ENCODE measurements at regions of chr12 and their contacts with region 1.

Region 1: DNA sequence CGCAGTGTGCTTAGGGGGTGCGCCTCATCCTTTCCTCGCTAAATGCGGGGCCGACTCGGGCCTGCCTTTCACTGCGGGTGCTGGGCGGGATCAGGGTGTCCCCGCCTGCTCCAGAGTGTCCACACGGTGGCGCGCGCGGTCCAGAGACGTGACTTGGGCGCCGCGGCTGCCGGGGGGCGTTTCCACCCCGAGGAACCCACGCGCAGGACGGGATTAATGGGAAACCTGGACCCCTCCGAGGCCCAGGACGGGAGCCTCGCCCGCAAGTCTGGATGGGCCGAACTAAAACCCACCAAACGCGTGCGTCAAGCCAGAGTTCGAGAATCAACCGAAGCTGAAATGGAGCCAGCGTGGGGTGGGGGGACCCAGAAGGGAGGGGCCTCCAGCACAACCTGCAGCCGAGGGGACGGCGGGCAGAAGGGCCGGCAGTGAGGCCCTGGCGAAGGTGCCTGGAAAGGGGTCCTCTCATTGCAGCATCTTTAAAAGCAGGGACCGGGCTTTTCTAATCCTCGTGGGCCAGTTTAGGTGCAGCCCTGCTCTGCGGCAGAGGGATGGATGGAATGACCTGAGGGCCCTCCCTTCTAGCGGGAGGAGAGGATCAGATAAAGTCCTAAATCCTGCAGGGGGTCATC is 93.3 kb downstream of the NINJ2 start:
- DNase-seq: peak; percentile 90 to 91
- ATAC-seq: peak; percentile 69 to 88 (median 80)
- H3K4me3 ChIP-seq: peak overlapping the region; percentile 34 to 78 (median 64)
- H3K27ac ChIP-seq: peak overlapping the region; percentile 86 to 99 (median 93)
- H3K4me1 ChIP-seq: peaks cover 16 to 49% (median 37%) of the 10 kb centered on the region in 9 donors
- H3K27me3 ChIP-seq: no peaks in the 10 kb centered on the region
- CTCF ChIP-seq: peak; percentile 91 to 99 (median 95)

Region 2: DNA sequence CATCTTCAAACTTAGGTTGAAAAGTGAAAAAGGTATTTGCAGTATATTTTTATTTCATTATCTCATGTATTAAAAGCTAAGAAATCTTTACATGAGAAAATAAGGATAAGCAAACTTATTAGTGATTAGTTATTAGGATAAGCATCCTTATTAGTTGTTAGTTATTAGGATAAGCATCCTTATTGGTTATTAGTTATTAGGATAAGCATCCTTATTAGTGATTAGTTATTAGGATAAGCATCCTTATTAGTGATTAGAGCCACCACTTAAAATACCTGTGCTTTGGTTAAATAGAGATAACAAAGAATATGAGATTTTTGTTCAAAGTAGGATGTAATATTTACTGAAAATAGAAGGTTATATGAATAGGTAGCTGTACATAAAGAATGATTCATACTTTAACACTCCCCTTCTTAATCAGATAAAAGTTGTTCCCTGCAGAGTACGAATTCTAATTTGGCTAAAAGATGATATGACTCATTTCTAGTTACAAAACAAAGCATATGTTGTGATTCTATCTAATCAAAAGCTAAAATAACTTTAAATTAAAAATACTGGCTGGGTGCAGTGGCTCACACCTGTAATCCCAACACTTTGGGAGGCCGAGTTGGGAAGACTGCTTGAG is 237.2 kb before region 1 on chr12:
- intact Hi-C with region 1: no loop called
- DNase-seq: no peak
- ATAC-seq: no peak
- H3K4me3 ChIP-seq: no peak overlapping the region
- H3K27ac ChIP-seq: no peak overlapping the region
- H3K4me1 ChIP-seq: no peaks in the 10 kb centered on the region
- H3K27me3 ChIP-seq: no peaks in the 10 kb centered on the region
- CTCF ChIP-seq: no peak

Region 3: DNA sequence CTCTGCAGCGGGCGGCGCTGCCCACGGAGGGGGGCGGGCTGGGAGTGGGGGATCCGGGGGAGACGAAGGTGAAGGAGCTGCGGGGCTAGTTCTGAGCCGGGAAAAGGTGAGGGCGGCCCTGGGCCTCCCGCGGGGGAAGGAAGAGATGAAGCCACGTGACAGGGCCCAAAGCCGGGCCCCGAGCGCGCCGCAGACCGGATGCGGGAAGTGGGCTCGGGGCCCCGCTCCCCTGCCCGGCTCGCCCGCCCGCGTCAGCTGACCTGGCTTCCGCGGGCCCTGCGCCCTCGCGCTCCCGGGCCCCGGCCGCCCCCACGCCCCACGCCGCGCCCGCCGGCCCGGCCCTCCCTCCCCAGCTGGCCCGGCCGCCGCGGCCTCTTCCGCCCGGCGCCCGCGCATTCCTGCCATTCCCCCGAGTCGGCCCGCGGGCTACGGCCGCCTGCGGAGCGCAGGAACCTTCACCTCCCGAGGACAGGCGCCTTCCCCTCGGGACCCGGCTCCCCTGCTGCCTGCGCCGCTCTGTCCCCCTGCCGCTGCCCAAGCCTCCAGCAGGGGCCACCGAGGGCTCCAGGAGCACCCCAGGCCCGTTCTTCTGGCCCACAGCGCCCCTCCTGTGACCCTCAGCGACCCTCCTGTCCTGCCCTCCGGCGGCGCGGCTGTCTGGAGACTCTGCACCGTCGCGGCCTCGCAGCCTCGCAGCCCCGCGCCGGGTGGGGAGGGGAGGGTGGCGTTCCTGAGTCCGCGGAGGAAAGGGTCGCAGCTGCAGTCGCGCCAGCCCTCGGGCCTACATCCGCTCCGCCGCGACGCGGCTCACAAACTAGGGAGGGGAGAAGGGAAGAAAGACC is 72.9 kb after region 1 on chr12:
- intact Hi-C with region 1: loop called in 9 of 10 experiments (anchors 5 to 10 kb)
- DNase-seq: peak; percentile 77 to 82
- ATAC-seq: peak; percentile 60 to 82 (median 68)
- H3K4me3 ChIP-seq: peak overlapping the region; percentile 45 to 76 (median 68)
- H3K27ac ChIP-seq: peak overlapping the region; percentile 98 to 100 (median 99)
- H3K4me1 ChIP-seq: peaks cover 23 to 88% (median 60%) of the 10 kb centered on the region in 9 donors
- H3K27me3 ChIP-seq: no peaks in the 10 kb centered on the region
- CTCF ChIP-seq: peak in 8 of 9 donors; percentile 5 to 49 (median 36)

Region 4: DNA sequence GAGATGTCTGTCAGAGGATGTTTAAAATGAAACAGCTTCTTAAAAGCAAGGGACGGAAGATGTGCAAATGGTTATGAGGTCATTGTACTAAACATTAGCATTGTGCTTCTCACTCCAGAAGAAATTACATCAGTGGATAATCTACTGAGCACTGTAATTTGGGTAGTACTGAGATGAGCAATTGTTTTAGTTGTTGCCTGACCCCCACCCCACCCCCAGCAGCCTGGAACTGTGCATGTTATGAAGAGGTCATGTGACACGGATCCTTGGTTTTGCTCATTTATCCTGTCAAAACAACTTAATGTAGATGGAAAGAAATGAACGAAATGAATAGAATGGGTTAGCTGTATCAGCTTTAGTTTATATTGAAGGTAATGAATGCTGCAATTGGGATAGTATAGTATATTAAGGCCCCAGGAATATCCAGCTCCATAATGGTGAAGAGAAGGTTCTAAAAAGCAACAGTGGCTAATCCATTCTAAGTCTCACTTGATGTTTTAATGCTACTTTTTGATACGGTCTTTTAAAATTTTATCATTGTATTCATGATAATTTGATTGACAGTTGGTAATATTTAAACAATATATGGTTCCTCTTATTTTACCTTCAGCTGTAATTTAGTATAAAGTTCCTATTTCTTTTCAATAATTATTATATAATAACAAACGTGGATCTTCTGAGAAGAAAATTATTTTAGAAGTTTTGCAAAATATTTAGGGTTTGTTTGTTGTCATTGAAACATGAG is 240.9 kb after region 1 on chr12:
- intact Hi-C with region 1: loop called (anchors 2 to 10 kb)
- DNase-seq: no peak
- ATAC-seq: peak in 1 of 8 donors; percentile 34
- H3K4me3 ChIP-seq: no peak overlapping the region
- H3K27ac ChIP-seq: no peak overlapping the region
- H3K4me1 ChIP-seq: peaks cover 0 to 77% (median 54%) of the 10 kb centered on the region in 9 donors
- H3K27me3 ChIP-seq: no peaks in the 10 kb centered on the region
- CTCF ChIP-seq: no peak

Region 5: DNA sequence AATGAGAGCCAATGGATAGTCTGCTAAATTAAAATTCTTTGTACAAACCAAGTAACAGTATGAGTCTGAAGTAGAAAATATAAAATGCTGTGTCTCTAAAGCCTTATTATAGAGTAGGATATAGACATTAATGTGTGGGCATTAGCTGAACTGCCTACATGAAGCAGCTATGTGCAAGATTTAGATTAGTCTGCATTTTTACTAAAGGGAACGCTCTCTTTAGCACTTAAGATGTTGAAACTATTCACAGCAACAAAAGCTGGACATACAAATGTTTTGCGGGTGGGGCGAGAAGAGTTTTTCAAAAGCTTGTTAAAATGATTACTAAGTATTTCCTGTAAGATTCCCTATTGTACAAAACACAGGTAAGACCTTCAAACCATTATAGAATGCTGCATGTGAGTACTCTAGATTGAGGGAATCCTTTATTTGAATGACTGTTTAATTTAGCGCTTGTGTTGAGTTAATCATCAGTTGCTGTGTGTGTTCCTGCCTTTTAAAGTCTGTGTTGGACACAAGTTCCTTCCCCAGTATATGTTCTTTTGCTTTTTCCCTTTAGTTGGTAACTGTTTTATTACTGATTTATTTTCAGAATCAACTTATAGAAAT is 292.5 kb after region 1 on chr12:
- intact Hi-C with region 1: loop called in 1 of 10 experiments (anchors 5 kb)
- DNase-seq: no peak
- ATAC-seq: no peak
- H3K4me3 ChIP-seq: no peak overlapping the region
- H3K27ac ChIP-seq: no peak overlapping the region
- H3K4me1 ChIP-seq: peaks cover 0 to 5% (median 0%) of the 10 kb centered on the region in 9 donors
- H3K27me3 ChIP-seq: no peaks in the 10 kb centered on the region
- CTCF ChIP-seq: no peak

Region 6: DNA sequence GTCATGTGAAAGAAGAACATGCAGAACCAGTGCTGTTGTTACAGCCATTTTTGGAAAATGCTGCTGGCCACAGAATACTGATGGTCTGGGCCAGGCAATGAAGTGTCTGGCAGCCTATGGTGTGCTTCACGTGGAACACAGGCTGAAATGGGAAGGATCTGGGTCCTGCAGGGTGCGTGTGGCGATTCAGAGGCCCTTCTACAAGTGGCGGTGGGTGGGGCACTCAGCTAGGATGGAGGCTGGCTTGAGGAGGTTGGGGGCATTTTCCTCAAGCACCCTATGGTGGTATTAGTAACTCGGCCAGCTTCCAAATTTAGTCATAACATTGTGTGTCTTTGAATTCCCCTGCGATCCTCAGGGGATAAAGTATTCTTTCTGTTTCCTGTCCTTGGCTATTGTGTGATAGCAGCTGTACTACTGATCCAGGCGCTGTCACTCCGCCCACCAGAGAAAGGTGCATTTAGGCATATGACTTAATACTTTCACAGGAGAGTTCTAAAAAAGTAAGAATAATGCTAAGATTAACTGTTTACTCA is 388.7 kb after region 1 on chr12:
- intact Hi-C with region 1: loop called in 3 of 10 experiments (anchors 5 to 10 kb)
- DNase-seq: peak; percentile 29 to 50
- ATAC-seq: peak; percentile 51 to 91 (median 84)
- H3K4me3 ChIP-seq: no peak overlapping the region
- H3K27ac ChIP-seq: peak overlapping the region in 5 of 10 donors; percentile 15 to 71 (median 42)
- H3K4me1 ChIP-seq: peaks cover 0 to 19% (median 8%) of the 10 kb centered on the region in 9 donors
- H3K27me3 ChIP-seq: no peaks in the 10 kb centered on the region
- CTCF ChIP-seq: no peak

Region 7: GRCh38 chr12:1099158-1099557 is 529.2 kb after region 1 on chr12:
- intact Hi-C with region 1: loop called in 7 of 10 experiments (anchors 5 to 10 kb)
- DNase-seq: no peak
- ATAC-seq: no peak
- H3K4me3 ChIP-seq: no peak overlapping the region
- H3K27ac ChIP-seq: no peak overlapping the region
- H3K4me1 ChIP-seq: peaks cover 0 to 23% (median 0%) of the 10 kb centered on the region in 9 donors
- H3K27me3 ChIP-seq: no peaks in the 10 kb centered on the region
- CTCF ChIP-seq: no peak